Activated T-helper 2 cell treated with anti-CD3 and anti-CD28 coated beads, Interferon-gamma antibody, Interleukin-2, Interleukin-4, amounts not matched to agents 10 μg/mL and 5 μg/mL and 100 μg/mL, durations not matched to agents 14 hours and 24 hours and 36 hours (primary cell): ENCODE measurements at regions of chr1 and their contacts with region 1.

Region 1: GRCh38 chr1:27392096-27392777 is at the start of gene GPR3:
- DNase-seq: peak; percentile 90
- H3K4me3 Mint-ChIP-seq: peak within 1 kb of the TSS; percentile 82
- H3K27ac Mint-ChIP-seq: peak within 1 kb of the TSS; percentile 89
- H3K4me1 Mint-ChIP-seq: peaks cover 14% of the 10 kb centered on the region
- H3K27me3 Mint-ChIP-seq: peaks cover 6% of the 10 kb centered on the region
- total RNA-seq, gene GPR3: 3.7 and 3.9 TPM in 2 replicates

Region 2: GRCh38 chr1:27300341-27301051 is 91.7 kb before region 1 on chr1:
- intact Hi-C with region 1: loop called (anchors 1 kb)
- DNase-seq: peak; percentile 63
- H3K4me3 Mint-ChIP-seq: no peak overlapping the region
- H3K27ac Mint-ChIP-seq: no peak overlapping the region
- H3K4me1 Mint-ChIP-seq: peaks cover 3% of the 10 kb centered on the region
- H3K27me3 Mint-ChIP-seq: no peaks in the 10 kb centered on the region

Region 3: DNA sequence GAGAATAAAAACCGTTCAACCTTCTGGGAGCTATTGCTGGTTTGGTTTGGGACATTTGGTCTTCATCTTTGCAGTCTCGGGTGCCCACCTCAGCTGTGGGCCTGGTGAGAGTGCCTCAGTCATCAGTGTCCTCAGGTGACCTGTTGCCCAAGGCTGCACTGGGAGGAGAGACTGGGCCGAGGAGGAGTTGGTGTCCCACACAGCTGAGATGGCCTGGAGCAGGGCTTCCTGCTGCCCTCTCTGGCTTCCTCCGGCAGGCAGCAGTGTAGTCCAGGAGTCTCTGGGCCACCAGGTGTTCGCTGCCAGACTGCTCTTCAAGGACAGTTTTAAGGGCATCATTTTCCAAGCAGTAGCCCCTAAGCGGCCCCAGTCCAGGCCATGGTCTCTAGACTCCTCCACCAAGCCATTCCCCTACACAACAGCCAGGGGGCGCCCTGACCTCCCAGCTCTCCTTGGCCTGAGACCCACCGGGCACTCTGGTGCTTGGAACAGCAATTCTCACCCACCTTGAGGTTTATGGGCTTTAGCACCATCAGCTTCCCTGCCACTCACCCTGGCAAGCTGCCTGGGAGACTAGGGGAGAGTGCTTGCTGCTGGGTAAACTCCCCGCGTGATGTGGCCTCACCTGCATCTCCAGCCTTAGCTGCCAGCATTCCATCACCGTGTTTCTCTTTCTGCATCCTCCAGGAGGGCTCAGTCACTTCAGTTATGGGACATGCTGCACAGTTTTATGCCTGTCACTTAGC is 59.5 kb before region 1 on chr1:
- intact Hi-C with region 1: loop called (anchors 2 kb)
- DNase-seq: peak; percentile 35
- H3K4me3 Mint-ChIP-seq: no peak overlapping the region
- H3K27ac Mint-ChIP-seq: no peak overlapping the region
- H3K4me1 Mint-ChIP-seq: peaks cover 11% of the 10 kb centered on the region
- H3K27me3 Mint-ChIP-seq: no peaks in the 10 kb centered on the region

Region 4: GRCh38 chr1:27357281-27358037 is 34.8 kb before region 1 on chr1:
- intact Hi-C with region 1: loop called (anchors 1 kb)
- DNase-seq: peak; percentile 81
- H3K4me3 Mint-ChIP-seq: peak overlapping the region; percentile 56
- H3K27ac Mint-ChIP-seq: peak overlapping the region; percentile 76
- H3K4me1 Mint-ChIP-seq: peaks cover 27% of the 10 kb centered on the region
- H3K27me3 Mint-ChIP-seq: no peaks in the 10 kb centered on the region

Region 5: GRCh38 chr1:27365372-27366112 is 26.7 kb before region 1 on chr1:
- intact Hi-C with region 1: loop called (anchors 1 kb)
- DNase-seq: peak; percentile 68
- H3K4me3 Mint-ChIP-seq: peak overlapping the region; percentile 81
- H3K27ac Mint-ChIP-seq: peak overlapping the region; percentile 83
- H3K4me1 Mint-ChIP-seq: peaks cover 28% of the 10 kb centered on the region
- H3K27me3 Mint-ChIP-seq: no peaks in the 10 kb centered on the region

Region 6: DNA sequence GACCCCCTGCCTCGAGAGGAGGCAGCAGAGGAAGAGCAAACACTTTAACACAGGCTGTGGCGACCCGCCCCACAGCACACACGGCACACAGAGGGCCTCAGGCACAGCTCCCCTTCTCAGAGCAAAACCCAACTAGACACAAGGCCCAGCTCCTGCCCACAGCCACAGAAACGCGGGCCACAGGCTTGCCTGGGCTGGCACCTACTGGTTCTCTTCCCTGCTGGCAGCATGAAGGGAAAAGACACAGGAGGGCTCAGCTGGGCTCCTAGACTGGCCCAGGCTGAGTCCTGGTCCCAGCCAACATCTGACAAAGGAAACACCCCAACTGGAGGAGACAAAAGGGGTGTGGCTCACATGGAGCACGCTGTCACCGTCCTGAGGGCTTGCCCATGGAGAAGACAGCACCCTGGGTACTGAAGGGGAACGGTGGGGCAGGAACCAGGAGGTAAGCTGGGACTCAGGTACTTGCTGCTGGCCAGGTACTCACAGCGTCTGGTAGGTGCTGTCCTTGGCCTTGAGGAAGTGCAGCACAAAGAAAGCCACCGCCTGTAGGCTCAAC is 12.6 kb before region 1 on chr1:
- intact Hi-C with region 1: no loop called
- DNase-seq: no peak
- H3K4me3 Mint-ChIP-seq: no peak overlapping the region
- H3K27ac Mint-ChIP-seq: no peak overlapping the region
- H3K4me1 Mint-ChIP-seq: no peaks in the 10 kb centered on the region
- H3K27me3 Mint-ChIP-seq: peaks cover 12% of the 10 kb centered on the region